Activated T-helper 1 cell treated with anti-CD3 and anti-CD28 coated beads, Interleukin-12 subunit alpha, Interleukin-12 subunit beta, Interleukin-2, Interleukin-4 antibody, amounts not matched to agents 30 ng/mL and 10 ng/mL and 1 ng/mL, durations not matched to agents 14 hours and 24 hours and 36 hours (primary cell): ENCODE measurements at regions of chr10 and their contacts with region 1.

Region 1: DNA sequence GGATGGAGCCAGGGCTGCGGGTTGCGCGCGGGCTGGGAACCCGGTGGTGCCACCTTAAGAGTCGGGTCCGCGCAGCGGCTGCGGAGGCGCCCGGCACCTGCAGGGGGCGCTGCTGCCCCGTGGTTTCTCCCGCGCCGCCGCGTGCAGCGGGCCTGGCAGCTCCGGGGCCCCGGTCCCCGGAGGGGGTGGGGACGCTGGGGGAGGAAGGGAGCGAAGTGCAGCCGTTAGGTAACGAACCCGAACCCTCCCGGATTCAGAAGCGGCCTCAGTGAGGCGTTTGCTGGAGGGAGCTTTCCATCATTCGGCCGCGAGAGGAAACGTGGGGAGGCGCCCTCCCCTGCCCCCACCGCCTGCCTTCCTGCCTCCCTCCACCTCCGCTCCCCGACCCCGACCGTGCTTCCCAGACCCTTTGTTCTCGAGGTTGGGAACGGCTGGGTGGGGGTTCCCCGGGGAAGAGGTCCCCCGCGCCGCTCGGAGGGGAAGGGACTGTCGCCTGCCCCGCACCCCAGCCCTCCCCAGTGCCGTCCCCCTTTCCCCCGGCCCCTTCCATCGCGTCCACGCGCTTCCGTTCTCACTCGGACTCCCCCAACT is 29.6 kb downstream of the SKIDA1 start:
- DNase-seq: peak; percentile 82
- H3K4me3 Mint-ChIP-seq: peak overlapping the region; percentile 90
- H3K27ac Mint-ChIP-seq: no peak overlapping the region
- H3K4me1 Mint-ChIP-seq: peaks cover 20% of the 10 kb centered on the region
- H3K27me3 Mint-ChIP-seq: peaks cover 71% of the 10 kb centered on the region

Region 2: GRCh38 chr10:21078410-21079329 is 417.2 kb before region 1 on chr10:
- intact Hi-C with region 1: loop called (anchors 5 kb)
- DNase-seq: no peak
- H3K4me3 Mint-ChIP-seq: no peak overlapping the region
- H3K27ac Mint-ChIP-seq: no peak overlapping the region
- H3K4me1 Mint-ChIP-seq: no peaks in the 10 kb centered on the region
- H3K27me3 Mint-ChIP-seq: no peaks in the 10 kb centered on the region

Region 3: GRCh38 chr10:21208666-21209316 is 287.1 kb before region 1 on chr10:
- intact Hi-C with region 1: no loop called
- DNase-seq: no peak
- H3K4me3 Mint-ChIP-seq: no peak overlapping the region
- H3K27ac Mint-ChIP-seq: no peak overlapping the region
- H3K4me1 Mint-ChIP-seq: no peaks in the 10 kb centered on the region
- H3K27me3 Mint-ChIP-seq: no peaks in the 10 kb centered on the region

Region 4: GRCh38 chr10:21449288-21449966 is 46.4 kb before region 1 on chr10:
- intact Hi-C with region 1: no loop called
- DNase-seq: no peak
- H3K4me3 Mint-ChIP-seq: no peak overlapping the region
- H3K27ac Mint-ChIP-seq: no peak overlapping the region
- H3K4me1 Mint-ChIP-seq: no peaks in the 10 kb centered on the region
- H3K27me3 Mint-ChIP-seq: peaks cover 2% of the 10 kb centered on the region

Region 5: DNA sequence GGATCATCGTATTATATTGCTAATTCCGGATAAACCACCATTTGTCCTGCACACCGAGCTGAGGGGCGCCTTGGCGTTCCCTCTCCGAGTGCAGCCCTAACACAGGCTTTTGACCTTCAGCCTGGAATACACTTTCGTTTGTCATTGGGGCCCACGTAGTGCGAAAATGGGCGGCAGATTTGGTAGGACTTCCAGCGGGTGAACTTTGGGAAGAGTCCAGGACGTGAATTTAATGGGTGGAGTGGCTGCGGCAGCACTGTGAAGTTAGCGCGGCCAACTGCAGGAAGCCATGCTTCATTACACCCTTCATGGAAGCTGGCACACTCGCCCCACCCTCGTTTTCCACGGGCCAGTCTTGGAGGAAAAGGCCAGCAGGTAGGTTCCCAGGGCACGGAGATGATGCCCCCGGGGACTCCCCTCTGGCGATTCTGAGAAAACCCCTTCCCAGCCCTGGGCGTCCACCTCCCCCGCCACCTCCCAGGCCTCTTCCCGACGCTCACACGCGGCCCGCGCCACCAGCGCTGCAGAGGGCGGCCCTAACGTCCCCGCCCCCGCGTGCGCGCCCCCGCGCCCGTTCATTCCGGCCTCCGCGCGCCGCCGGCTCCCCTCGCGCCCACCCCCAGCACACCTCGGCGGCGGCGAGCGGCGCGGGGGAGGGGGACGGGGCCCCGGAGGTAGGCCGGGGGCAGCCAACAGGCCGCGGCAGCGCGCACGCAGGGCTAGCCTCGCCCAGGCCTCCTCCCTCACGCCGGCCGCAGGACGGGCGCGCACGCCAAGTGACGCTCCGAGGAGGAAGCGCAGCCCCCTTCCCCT is 37.8 kb after region 1 on chr10 and contains the start of gene MLLT10:
- intact Hi-C with region 1: loop called (anchors 1 kb)
- DNase-seq: peak; percentile 89
- H3K4me3 Mint-ChIP-seq: peak within 1 kb of the TSS; percentile 90
- H3K27ac Mint-ChIP-seq: peak within 1 kb of the TSS; percentile 90
- H3K4me1 Mint-ChIP-seq: peaks cover 17% of the 10 kb centered on the region
- H3K27me3 Mint-ChIP-seq: peaks cover 16% of the 10 kb centered on the region
- total RNA-seq, gene MLLT10: 40.9 and 43.1 TPM in 2 replicates

Region 6: GRCh38 chr10:21953585-21954057 is 457.8 kb after region 1 on chr10:
- intact Hi-C with region 1: loop called (anchors 1 kb)
- DNase-seq: no peak
- H3K4me3 Mint-ChIP-seq: no peak overlapping the region
- H3K27ac Mint-ChIP-seq: no peak overlapping the region
- H3K4me1 Mint-ChIP-seq: peaks cover 6% of the 10 kb centered on the region
- H3K27me3 Mint-ChIP-seq: peaks cover 2% of the 10 kb centered on the region

Region 7: GRCh38 chr10:22316285-22317120 is 820.7 kb after region 1 on chr10 and contains the start of gene COMMD3:
- intact Hi-C with region 1: loop called (anchors 5 kb)
- DNase-seq: peak; percentile 77
- H3K4me3 Mint-ChIP-seq: peak within 1 kb of the TSS; percentile 98
- H3K27ac Mint-ChIP-seq: peak within 1 kb of the TSS; percentile 100
- H3K4me1 Mint-ChIP-seq: peaks cover 50% of the 10 kb centered on the region
- H3K27me3 Mint-ChIP-seq: peaks cover 2% of the 10 kb centered on the region
- total RNA-seq, gene COMMD3: 78.7 and 84.4 TPM in 2 replicates

Region 8: GRCh38 chr10:22427890-22428571 is 932.2 kb after region 1 on chr10:
- intact Hi-C with region 1: no loop called
- DNase-seq: no peak
- H3K4me3 Mint-ChIP-seq: no peak overlapping the region
- H3K27ac Mint-ChIP-seq: no peak overlapping the region
- H3K4me1 Mint-ChIP-seq: peaks cover 7% of the 10 kb centered on the region
- H3K27me3 Mint-ChIP-seq: peaks cover 36% of the 10 kb centered on the region

Region 9: DNA sequence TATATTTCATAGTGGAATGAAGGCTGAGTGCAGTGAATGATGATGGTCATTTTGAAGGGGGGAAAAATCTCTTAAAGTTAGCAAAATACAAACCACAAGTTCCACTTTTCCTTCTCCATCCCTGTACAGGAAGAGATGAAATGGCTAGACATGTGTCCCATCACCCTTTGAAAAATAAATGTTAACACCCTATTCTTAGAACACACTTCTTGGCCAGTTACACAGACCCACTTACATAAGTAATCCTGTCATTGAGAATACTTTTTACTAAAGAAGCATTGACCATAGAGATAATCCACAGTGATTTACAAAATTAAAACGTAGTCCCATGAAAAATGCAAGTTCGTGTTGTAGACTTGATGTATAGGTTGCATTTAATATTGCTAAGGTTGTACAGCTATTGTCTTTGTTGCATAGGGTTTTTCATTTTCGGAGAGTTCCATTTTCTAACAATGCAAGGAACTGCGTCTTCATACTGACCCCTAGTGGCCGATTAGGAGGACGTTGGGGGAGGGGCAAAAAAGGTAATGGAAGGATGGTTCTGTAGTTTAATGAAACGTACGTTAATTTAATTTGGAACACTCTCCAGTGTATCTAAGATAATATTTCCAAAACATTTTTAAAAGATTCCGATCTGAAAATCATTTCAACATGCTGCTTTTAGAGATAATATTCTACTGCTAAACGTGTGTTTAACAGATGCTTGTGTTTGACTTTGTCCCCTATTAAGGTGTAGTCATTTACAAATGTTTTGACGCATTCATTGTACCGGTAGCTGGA is 1492.9 kb after region 1 on chr10:
- intact Hi-C with region 1: loop called (anchors 5 kb)
- DNase-seq: peak; percentile 57
- H3K4me3 Mint-ChIP-seq: no peak overlapping the region
- H3K27ac Mint-ChIP-seq: no peak overlapping the region
- H3K4me1 Mint-ChIP-seq: peaks cover 22% of the 10 kb centered on the region
- H3K27me3 Mint-ChIP-seq: peaks cover 9% of the 10 kb centered on the region